HCT116 (cell line): ENCODE measurements at regions of chr15 and their contacts with region 1.

Region 1: DNA sequence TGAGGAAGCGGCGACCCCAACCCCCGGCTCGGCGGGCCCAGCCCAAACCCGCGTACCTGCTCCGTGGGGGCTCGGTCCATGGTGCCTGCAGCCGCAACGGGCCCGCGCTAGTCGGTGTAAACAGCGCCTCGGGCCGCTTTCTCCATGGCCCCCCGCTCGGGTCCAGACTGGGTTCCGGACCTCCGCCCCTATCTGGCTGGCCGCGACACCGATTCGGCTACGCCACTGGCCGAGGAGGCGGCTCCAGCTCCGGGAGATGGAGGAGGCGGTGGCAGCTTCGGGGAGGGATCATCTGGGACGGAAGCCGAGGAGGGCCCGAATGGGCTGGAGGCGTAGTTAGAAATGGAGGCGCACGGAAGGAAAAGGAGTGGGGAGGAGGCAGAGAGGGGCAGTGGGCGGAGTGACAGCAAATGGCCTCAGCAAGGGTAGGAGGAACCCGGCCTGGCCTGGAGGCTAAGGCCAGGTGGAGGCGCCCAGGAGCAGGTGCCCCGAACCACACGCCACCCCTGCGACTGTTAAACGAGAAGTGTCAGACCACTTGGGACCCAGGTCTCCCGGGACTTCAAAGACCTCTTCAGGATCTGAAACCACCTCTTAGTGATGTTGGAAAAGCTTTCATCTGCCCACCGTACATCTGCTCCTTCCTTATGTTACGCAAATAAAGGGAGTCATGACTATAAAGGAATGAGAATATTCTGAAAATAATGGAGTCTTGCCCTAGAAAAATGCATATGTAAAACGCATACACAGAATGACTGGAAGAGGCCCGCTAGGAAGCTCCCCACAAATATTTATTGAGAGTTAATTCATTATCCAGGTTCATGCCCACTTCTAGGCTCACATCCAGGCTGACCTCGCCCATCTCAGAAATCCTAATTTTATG is at the start of gene SECISBP2L:
- DNase-seq: peak; percentile 91
- ATAC-seq: peak; percentile 98
- H3K4me3 ChIP-seq: peak within 1 kb of the TSS; percentile 81 to 86
- H3K27ac ChIP-seq: peak within 1 kb of the TSS; percentile 64
- H3K4me1 ChIP-seq: peaks cover 11 to 17% of the 10 kb centered on the region in 2 experiments; a peak in 3 of 4 replicates
- H3K27me3 ChIP-seq: no peaks in the 10 kb centered on the region
- CTCF ChIP-seq: peak in 2 of 3 experiments; percentile 49 to 66; a peak in 4 of 6 replicates
- POLR2A ChIP-seq: peak; percentile 44
- RAD21 ChIP-seq: peak; percentile 40; the same call in 1 of the 2 replicates
- total RNA-seq, gene SECISBP2L: 22.9 TPM

Region 2: GRCh38 chr15:48868536-48868935 is 177.9 kb before region 1 on chr15:
- CTCF ChIA-PET with region 1: no interaction called
- POLR2A ChIA-PET with region 1: no interaction called
- RAD21 ChIA-PET with region 1: no interaction called
- intact Hi-C with region 1: loop called (anchors 5 kb)
- DNase-seq: no peak
- ATAC-seq: no peak
- H3K4me3 ChIP-seq: no peak overlapping the region
- H3K27ac ChIP-seq: no peak overlapping the region
- H3K4me1 ChIP-seq: peaks cover 0 to 6% of the 10 kb centered on the region in 2 experiments; a peak in 3 of 4 replicates
- H3K27me3 ChIP-seq: no peaks in the 10 kb centered on the region
- CTCF ChIP-seq: no peak
- POLR2A ChIP-seq: no peak
- RAD21 ChIP-seq: no peak

Region 3: GRCh38 chr15:49082960-49083359 is 36.5 kb after region 1 on chr15:
- CTCF ChIA-PET with region 1: no interaction called
- POLR2A ChIA-PET with region 1: no interaction called
- RAD21 ChIA-PET with region 1: no interaction called
- intact Hi-C with region 1: no loop called
- DNase-seq: no peak
- ATAC-seq: no peak
- H3K4me3 ChIP-seq: no peak overlapping the region
- H3K27ac ChIP-seq: no peak overlapping the region
- H3K4me1 ChIP-seq: no peaks in the 10 kb centered on the region
- H3K27me3 ChIP-seq: no peaks in the 10 kb centered on the region
- CTCF ChIP-seq: no peak
- POLR2A ChIP-seq: no peak
- RAD21 ChIP-seq: no peak

Region 4: GRCh38 chr15:49135893-49136292 is 89.4 kb after region 1 on chr15:
- CTCF ChIA-PET with region 1: no interaction called
- POLR2A ChIA-PET with region 1: no interaction called
- RAD21 ChIA-PET with region 1: no interaction called
- intact Hi-C with region 1: loop called (anchors 5 kb)
- DNase-seq: no peak
- ATAC-seq: no peak
- H3K4me3 ChIP-seq: no peak overlapping the region
- H3K27ac ChIP-seq: no peak overlapping the region
- H3K4me1 ChIP-seq: no peaks in the 10 kb centered on the region
- H3K27me3 ChIP-seq: no peaks in the 10 kb centered on the region
- CTCF ChIP-seq: no peak
- POLR2A ChIP-seq: no peak
- RAD21 ChIP-seq: no peak